Right ventricle myocardium inferior (tissue), 1 donor: ENCODE measurements at regions of chr19 and their contacts with region 1.

Region 1: DNA sequence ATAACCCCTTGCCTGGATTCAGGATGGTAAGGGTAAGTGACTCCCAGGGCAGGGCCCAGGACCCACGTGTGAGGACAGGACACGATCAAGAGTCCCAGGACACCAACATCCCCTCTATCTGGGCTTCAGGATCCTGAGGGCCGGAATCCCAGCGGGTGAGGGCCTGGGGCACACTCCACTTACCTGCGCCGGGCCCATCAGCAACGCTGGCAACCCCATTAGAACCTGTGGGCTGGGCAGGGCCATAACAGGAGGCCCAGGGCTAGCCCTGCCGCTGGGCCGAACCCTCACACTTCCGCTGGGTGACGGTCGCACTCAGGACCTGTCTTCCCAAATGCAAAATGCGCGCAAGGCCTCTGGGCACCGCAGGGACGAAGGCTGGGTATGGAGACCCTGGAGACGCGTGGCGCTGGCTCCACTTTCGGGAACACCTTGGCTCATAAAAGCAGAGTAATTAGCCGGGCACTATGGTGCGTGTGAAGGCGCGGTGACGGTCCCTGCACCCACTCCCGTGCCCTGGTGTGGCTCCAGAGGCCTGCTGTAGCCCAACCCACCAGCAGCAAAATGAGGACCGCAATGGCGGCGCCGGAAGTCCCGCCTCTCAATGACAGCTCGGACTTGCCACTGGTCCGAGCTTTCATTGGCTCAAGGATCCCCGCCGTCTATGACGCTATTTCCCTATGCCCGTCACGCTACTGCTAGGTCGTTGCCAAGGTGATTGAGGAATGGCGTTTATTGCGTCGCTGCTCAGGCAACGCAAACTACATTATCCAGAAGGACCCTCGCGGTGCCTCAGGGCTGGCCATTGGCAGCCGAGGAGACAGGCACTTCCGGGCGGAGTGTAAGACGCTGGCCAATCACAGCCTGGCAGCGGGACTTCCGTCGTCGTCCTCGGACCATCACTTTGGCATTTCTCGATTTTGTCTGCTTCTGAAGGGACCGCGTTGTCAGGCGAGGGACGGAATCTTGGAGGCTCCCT is at the start of gene ZNF132:
- DNase-seq: peak; percentile 98
- ATAC-seq: peak; percentile 98
- total RNA-seq, gene ZNF132: 5.1 TPM

Region 2: DNA sequence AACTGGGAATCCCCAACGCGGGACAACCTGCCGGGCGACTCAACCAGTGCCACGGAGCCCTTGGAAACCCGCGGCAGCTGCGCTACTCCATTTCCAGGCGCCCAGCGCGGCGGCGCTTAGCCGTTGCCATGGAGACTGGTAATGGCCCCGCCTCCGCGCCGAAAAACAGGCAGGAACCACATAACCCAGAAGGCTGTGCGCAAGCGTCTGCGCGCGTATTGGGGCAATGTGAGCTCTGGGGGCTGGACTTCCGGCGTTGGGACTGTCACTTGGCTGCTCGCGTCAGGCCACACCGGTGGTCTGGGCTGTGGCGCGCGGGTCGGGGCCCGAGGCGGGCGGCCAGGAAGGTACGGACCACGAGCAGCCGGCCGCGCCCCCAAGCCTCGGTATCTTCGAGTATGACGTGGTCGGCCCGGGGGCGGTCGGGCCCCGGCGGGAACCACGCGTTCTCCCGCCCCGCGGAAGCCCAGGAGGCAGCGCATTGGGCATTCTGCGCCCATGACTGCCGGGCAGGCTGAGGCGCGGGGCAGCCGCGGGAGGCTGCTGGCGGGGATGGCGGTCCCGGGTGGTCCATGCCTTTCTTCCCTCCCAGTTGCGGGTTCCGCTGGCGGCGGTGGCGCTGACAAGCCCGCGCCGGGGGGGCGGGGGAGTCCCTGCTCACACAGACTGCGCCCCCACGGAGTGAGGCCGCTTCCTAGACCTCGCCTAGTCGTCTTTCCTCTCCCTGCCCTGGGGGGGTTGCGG is 11.7 kb after region 1 on chr19 and contains the start of gene ZNF324B:
- intact Hi-C with region 1: loop called (anchors 1 kb)
- DNase-seq: peak; percentile 99
- ATAC-seq: peak; percentile 98
- total RNA-seq, gene ZNF324B: 3.2 TPM